ENCODE measurements at regions of chr9 and their contacts with region 1.

Region 1: DNA sequence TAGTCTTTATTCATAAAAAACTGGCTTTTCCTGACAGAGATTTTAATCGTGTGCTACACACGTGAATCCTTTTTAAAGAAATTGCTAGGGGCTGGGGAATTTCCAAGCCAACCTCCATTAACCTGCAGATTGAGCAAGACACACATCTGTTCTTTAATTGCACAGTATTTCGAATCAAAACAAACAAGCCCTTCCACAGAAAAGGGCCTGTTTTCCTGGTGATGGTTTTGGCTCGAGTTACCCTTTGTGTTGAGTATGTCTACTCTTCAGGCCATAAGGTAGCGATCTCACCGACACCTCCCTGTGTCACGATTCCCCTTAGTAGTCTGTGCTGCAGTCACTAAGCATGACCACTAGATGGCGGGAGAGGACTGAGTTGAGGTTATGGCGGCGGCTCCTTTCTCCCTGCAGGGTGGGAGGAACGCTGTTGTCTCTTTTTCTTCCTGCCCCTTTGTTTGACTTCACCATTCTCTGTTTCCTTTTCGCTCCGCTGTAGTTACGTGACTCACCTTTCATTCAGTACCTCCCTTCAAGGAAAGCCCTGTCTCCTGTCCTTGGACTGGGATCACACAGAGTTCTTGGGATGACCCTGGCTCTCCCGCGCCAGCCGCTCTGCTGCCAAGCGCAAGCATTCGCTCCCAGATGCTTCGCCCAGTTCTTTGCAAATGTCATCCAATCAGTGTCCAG is 137.1 kb upstream of the SLC24A2 start:
- DNase-seq: peak; percentile 87
- ATAC-seq: peak; percentile 98
- H3K4me3 Mint-ChIP-seq: peak overlapping the region; percentile 60
- H3K27ac Mint-ChIP-seq: peak overlapping the region; percentile 22
- H3K4me1 Mint-ChIP-seq: peaks cover 15% of the 10 kb centered on the region
- H3K27me3 Mint-ChIP-seq: peaks cover 16% of the 10 kb centered on the region

Region 2: DNA sequence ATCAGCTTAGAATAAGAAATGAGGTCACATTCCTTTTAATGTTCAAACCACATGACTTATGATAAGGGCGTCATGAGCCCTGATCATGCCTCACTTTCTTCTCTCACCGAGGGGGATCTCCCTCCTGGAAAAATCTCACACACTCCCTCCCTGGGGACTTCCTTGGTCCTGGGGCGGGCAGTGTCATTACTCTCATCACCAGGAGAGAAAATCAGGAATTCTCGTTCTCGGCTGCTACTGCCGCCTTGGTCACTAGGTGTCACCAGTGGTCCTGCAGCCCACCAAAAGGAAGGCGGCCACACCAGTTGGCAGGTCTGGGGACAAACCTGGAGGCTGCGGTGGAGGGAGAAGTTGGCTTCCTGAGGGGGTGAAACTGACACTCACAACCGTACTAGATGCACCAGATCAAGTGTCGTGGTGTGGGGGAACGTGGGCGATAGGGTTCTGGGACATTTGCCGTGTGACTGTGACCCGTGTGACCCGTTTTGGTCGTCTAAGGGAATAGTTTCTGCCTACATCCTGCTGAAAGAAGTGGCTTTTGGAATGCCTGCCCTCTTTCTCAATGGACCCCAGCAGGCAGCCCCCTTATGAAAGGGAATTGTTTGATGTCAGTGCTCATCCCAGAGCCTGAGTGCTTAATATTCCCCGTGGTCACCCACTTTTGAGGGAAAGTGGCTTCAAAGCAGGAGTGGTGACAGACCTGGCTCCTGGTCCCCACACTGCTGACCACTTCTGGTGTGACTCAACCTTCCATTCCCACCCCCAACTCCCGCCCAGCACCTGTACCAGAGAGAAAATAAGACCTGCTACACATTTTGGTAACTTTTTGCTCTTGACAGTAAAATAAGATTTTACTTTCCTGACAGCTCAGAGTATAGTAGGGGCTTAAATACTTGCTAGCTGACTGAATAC is 454.0 kb before region 1 on chr9:
- CTCF ChIA-PET with region 1: no interaction called
- POLR2A ChIA-PET with region 1: no interaction called
- intact Hi-C with region 1: loop called in 1 of 2 experiments (anchors 5 kb)
- DNase-seq: peak; percentile 77
- ATAC-seq: peak; percentile 88
- H3K4me3 Mint-ChIP-seq: no peak overlapping the region
- H3K27ac Mint-ChIP-seq: peak overlapping the region; percentile 19
- H3K4me1 Mint-ChIP-seq: peaks cover 13% of the 10 kb centered on the region
- H3K27me3 Mint-ChIP-seq: no peaks in the 10 kb centered on the region

Region 3: GRCh38 chr9:20043035-20043434 is 117.1 kb after region 1 on chr9:
- CTCF ChIA-PET with region 1: no interaction called
- POLR2A ChIA-PET with region 1: no interaction called
- intact Hi-C with region 1: loop called in 1 of 2 experiments (anchors 5 kb)
- DNase-seq: peak; percentile 35
- ATAC-seq: peak; percentile 85
- H3K4me3 Mint-ChIP-seq: peak overlapping the region; percentile 34
- H3K27ac Mint-ChIP-seq: peak overlapping the region; percentile 26
- H3K4me1 Mint-ChIP-seq: peaks cover 27% of the 10 kb centered on the region
- H3K27me3 Mint-ChIP-seq: no peaks in the 10 kb centered on the region

Region 4: GRCh38 chr9:20242510-20243189 is 316.7 kb after region 1 on chr9:
- CTCF ChIA-PET with region 1: no interaction called
- POLR2A ChIA-PET with region 1: no interaction called
- intact Hi-C with region 1: loop called in 1 of 2 experiments (anchors 5 kb)
- DNase-seq: peak; percentile 30
- ATAC-seq: peak; percentile 82
- H3K4me3 Mint-ChIP-seq: peak overlapping the region; percentile 4
- H3K27ac Mint-ChIP-seq: no peak overlapping the region
- H3K4me1 Mint-ChIP-seq: peaks cover 44% of the 10 kb centered on the region
- H3K27me3 Mint-ChIP-seq: peaks cover 19% of the 10 kb centered on the region

Region 5: GRCh38 chr9:21110708-21111576 is 1185.0 kb after region 1 on chr9:
- CTCF ChIA-PET with region 1: no interaction called
- POLR2A ChIA-PET with region 1: no interaction called
- intact Hi-C with region 1: loop called (anchors 1 kb)
- DNase-seq: no peak
- ATAC-seq: peak; percentile 75
- H3K4me3 Mint-ChIP-seq: no peak overlapping the region
- H3K27ac Mint-ChIP-seq: no peak overlapping the region
- H3K4me1 Mint-ChIP-seq: no peaks in the 10 kb centered on the region
- H3K27me3 Mint-ChIP-seq: no peaks in the 10 kb centered on the region

Measured in activated CD4-positive, alpha-beta T cell treated with anti-CD3 and anti-CD28 coated beads for 36 hours (primary cell).